ENCODE measurements at regions of chrX and their contacts with region 1.

Region 1: GRCh38 chrX:4547213-4547836 is 833.9 kb upstream of the PRKX start:
- DNase-seq: peak; percentile 36 to 65 (median 45)
- ATAC-seq: no peak
- H3K4me3 ChIP-seq: no peak overlapping the region
- H3K27ac ChIP-seq: no peak overlapping the region
- H3K4me1 ChIP-seq: no peaks in the 10 kb centered on the region
- H3K27me3 ChIP-seq: no peaks in the 10 kb centered on the region
- CTCF ChIP-seq: peak; percentile 56 to 88 (median 74)
- POLR2A ChIP-seq: no peak

Region 2: DNA sequence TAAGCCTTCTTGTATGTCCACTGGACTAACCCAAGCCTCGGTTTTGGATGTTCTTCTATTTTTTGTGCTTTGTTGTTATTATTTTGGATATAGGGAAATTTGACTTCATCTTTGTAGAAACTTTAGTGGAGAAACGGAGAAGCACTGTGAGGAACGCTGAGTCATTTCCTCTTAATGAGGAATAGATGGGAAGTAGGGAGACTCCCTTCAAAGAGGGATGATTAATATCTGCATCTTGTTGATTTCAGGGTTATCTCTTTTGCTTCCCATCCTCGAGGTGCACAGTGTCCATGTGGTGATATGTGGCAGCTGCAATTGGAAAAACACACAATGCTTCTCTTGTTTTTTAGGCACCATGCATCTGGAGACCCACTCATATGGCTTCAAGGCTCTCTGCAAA is 533.5 kb after region 1 on chrX:
- intact Hi-C with region 1: no loop called
- DNase-seq: no peak
- ATAC-seq: no peak
- H3K4me3 ChIP-seq: no peak overlapping the region
- H3K27ac ChIP-seq: no peak overlapping the region
- H3K4me1 ChIP-seq: no peaks in the 10 kb centered on the region
- H3K27me3 ChIP-seq: no peaks in the 10 kb centered on the region
- CTCF ChIP-seq: no peak
- POLR2A ChIP-seq: no peak

Region 3: DNA sequence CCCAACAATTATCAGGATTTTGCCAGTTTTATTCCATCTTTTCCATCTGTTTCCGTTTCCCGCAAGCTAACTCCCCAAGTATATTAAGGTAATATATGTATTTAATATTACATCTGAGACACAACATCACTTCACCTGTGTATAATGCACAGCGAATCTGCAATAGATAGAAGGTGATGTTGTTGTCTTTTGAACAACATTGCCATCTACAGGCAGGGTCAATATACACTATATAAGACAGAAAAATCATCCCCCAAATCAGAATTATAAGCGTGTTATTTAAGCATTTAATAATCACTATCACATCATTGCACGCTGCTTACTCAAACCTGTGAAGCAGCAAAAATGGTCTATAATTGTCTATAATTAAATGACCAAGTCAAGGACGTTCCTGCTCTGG is 565.8 kb after region 1 on chrX:
- intact Hi-C with region 1: loop called (anchors 10 kb)
- DNase-seq: no peak
- ATAC-seq: no peak
- H3K4me3 ChIP-seq: no peak overlapping the region
- H3K27ac ChIP-seq: no peak overlapping the region
- H3K4me1 ChIP-seq: no peaks in the 10 kb centered on the region
- H3K27me3 ChIP-seq: no peaks in the 10 kb centered on the region
- CTCF ChIP-seq: peak in 6 of 7 experiments; percentile 18 to 54 (median 48)
- POLR2A ChIP-seq: no peak